ENCODE measurements at regions of chr7 and their contacts with region 1.

Region 1: GRCh38 chr7:151782598-151783448 is 94.1 kb downstream of the PRKAG2 start:
- DNase-seq: peak; percentile 89
- H3K4me3 Mint-ChIP-seq: peak overlapping the region; percentile 80
- H3K27ac Mint-ChIP-seq: peak overlapping the region; percentile 86
- H3K4me1 Mint-ChIP-seq: peaks cover 7% of the 10 kb centered on the region
- H3K27me3 Mint-ChIP-seq: no peaks in the 10 kb centered on the region

Region 2: DNA sequence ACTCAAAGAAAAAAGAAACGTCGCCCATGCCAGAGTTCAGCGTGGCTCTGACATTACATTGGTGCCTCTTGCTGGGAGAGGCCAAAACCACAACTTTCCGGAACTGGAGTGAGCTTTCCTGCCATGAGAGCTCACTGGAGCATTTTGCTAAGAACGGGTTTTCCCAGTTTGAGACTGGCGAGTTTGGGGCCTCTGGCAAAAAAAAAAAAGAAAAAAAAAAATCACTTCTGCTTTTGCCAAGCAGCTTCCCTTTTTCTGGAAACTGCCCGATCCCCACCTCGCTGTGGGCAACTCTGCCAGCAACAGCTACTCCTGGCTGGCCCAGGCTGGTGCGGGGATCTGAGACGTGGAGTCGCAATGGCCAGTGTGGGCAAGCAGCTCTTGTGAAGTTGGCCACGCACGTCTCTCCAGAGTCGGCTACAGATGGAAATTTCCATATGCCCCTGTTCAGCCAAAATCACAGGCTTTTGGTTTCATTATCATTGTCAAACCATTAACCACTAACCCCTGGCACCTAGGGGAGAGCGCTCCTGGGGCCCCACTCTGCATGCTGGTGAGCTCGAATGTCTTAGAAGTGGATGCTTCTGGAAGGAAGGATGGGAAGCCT is 68.4 kb after region 1 on chr7:
- intact Hi-C with region 1: no loop called
- DNase-seq: peak; percentile 68
- H3K4me3 Mint-ChIP-seq: peak overlapping the region; percentile 59
- H3K27ac Mint-ChIP-seq: no peak overlapping the region
- H3K4me1 Mint-ChIP-seq: peaks cover 11% of the 10 kb centered on the region
- H3K27me3 Mint-ChIP-seq: peaks cover 4% of the 10 kb centered on the region

Region 3: DNA sequence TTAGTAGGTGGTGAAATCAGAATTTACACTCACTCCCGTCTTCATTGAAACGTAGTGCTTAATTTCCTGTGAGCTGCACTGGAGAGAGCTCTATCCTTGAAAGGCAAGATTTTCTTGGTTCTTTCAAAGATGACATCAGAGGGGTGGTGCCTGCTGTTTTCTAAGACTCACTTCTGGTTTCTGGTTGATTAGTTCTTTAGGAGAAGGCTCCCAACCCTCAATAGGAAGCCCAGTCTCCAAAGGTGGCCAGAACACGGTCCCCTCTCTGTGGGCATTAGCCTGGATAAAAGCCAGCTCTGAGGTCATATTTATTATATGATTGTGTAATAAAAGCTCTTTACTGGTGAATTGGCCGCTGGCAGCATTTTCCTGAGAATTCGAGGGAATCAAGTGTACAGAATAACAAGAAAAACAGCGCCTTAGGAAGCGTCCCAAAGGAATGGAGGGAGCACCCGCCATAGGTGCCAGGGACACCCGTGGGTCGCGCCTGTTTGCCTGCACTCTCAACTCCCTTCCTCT is 149.6 kb after region 1 on chr7:
- intact Hi-C with region 1: loop called (anchors 2 kb)
- DNase-seq: no peak
- H3K4me3 Mint-ChIP-seq: no peak overlapping the region
- H3K27ac Mint-ChIP-seq: no peak overlapping the region
- H3K4me1 Mint-ChIP-seq: peaks cover 18% of the 10 kb centered on the region
- H3K27me3 Mint-ChIP-seq: peaks cover 5% of the 10 kb centered on the region